Panc1 (cell line): ENCODE measurements at regions of chr12 and their contacts with region 1.

Region 1: DNA sequence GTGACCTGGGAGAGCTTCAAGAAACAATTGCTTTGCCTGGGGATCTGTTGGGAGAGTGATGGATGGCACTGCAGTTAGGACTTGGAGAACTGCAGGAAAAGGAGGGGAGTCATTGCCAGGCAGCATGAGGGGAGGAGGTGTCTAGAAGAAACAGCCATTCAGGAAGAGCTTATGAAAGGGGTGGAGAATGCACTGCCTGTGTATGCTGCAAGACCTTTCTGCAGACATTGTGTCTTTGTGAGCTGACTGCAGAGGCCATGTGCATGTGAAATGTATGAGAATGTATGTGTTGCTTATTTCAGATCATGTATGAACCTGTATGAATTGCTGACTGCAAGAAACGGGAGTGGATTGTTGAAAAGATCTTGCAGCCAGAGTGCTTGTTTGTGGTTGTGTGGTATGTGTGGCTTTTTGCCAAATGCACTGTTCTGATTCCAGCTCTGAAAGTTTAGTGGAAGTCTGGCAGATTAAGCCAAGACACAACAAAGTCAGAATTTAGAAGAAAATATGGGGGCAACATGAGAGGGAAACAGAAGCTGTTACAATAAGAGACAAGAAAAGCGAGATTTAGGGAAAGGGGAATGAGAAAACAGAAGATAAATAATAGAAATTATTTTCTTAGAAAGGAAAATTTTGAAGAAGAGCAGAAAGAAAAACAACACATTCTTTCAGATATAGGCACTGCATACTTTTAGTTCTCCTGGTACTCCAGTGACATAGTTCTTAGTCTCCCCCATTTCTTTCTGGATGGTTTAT is 9.8 kb upstream of the RIMKLB start:
- DNase-seq: no peak
- ATAC-seq: 0 out of 2 replicates have a peak, but pooled peaks have one; percentile 65
- H3K4me3 ChIP-seq: no peak overlapping the region
- H3K27ac ChIP-seq: no peak overlapping the region
- H3K4me1 ChIP-seq: no peaks in the 10 kb centered on the region
- H3K27me3 ChIP-seq: no peaks in the 10 kb centered on the region
- CTCF ChIP-seq: no peak

Region 2: GRCh38 chr12:8628726-8629125 is 59.3 kb before region 1 on chr12:
- CTCF ChIA-PET with region 1: no interaction called
- POLR2A ChIA-PET with region 1: no interaction called
- in situ Hi-C with region 1: no loop called
- intact Hi-C with region 1: no loop called
- DNase-seq: no peak
- ATAC-seq: no peak
- H3K4me3 ChIP-seq: no peak overlapping the region
- H3K27ac ChIP-seq: no peak overlapping the region
- H3K4me1 ChIP-seq: no peaks in the 10 kb centered on the region
- H3K27me3 ChIP-seq: no peaks in the 10 kb centered on the region
- CTCF ChIP-seq: no peak

Region 3: DNA sequence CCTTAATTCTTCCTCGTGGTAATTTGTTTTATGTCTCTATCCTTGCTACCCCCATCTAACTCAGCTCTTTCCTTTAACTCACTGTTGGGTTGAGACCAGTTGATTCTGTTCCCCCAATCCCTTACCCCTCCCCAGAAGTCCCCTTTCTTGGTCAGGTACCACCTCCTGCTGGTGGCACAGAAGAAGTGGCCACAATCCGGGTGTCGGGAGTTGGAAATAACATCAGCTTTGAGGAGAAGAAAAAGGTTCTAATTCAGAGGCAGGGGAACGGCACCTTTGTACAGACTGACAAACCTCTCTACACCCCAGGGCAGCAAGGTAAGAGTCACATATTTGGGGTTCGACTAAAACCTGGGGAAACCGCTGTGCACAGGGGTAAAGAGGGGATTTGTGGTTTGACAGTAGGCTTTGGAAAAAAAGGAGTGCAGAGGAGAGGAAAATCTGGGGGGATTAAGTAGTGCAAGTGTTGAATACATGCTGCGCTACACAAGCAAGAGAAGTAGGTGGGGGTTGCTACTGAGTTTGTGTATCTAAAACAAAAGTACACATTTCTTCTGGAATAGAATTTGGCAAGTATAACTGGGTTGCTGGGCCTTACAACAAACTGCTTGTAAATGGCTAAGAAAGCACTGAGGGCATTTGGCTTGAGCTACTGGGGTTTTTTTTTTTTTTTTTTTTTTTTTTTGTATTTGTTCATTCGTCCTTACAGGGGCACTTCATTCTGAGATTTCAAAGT is 135.7 kb after region 1 on chr12:
- CTCF ChIA-PET with region 1: no interaction called
- POLR2A ChIA-PET with region 1: no interaction called
- in situ Hi-C with region 1: no loop called
- intact Hi-C with region 1: loop called (anchors 2 kb)
- DNase-seq: no peak
- ATAC-seq: no peak
- H3K4me3 ChIP-seq: no peak overlapping the region
- H3K27ac ChIP-seq: no peak overlapping the region
- H3K4me1 ChIP-seq: no peaks in the 10 kb centered on the region
- H3K27me3 ChIP-seq: no peaks in the 10 kb centered on the region
- CTCF ChIP-seq: peak; percentile 52